ENCODE measurements at regions of chr4 and their contacts with region 1.

Region 1: GRCh38 chr4:140523857-140524742 is at the start of gene ELMOD2:
- DNase-seq: peak; percentile 93 to 99 (median 96)
- ATAC-seq: peak; percentile 99
- H3K4me3 ChIP-seq: peak within 1 kb of the TSS; percentile 65
- H3K4me3 Mint-ChIP-seq: peak within 1 kb of the TSS; percentile 91
- H3K27ac ChIP-seq: peak within 1 kb of the TSS in 1 of 2 donors; percentile 58
- H3K27ac Mint-ChIP-seq: peak within 1 kb of the TSS; percentile 79
- H3K4me1 ChIP-seq: peaks cover 10% of the 10 kb centered on the region
- H3K4me1 Mint-ChIP-seq: peaks cover 26% of the 10 kb centered on the region
- H3K27me3 ChIP-seq: no peaks in the 10 kb centered on the region
- H3K27me3 Mint-ChIP-seq: no peaks in the 10 kb centered on the region
- CTCF ChIP-seq: peak; percentile 82
- total RNA-seq, gene ELMOD2: 12.3 to 14.9 TPM

Region 2: GRCh38 chr4:140373328-140374129 is 150.6 kb before region 1 on chr4 and contains the start of gene SCOC:
- CTCF ChIA-PET with region 1: interaction called, 11 read pairs
- POLR2A ChIA-PET with region 1: interaction called, 26 read pairs
- intact Hi-C with region 1: loop called (anchors 2 kb)
- DNase-seq: peak; percentile 90 to 98 (median 94)
- ATAC-seq: peak; percentile 95
- H3K4me3 ChIP-seq: peak within 1 kb of the TSS; percentile 94
- H3K4me3 Mint-ChIP-seq: peak within 1 kb of the TSS; percentile 87
- H3K27ac ChIP-seq: peak within 1 kb of the TSS; percentile 65 to 83
- H3K27ac Mint-ChIP-seq: no peak within 1 kb of the TSS
- H3K4me1 ChIP-seq: peaks cover 14% of the 10 kb centered on the region
- H3K4me1 Mint-ChIP-seq: peaks cover 32% of the 10 kb centered on the region
- H3K27me3 ChIP-seq: no peaks in the 10 kb centered on the region
- H3K27me3 Mint-ChIP-seq: no peaks in the 10 kb centered on the region
- CTCF ChIP-seq: no peak
- total RNA-seq, gene SCOC: 5.9 to 6.8 TPM

Measured in CD4-positive, alpha-beta T cell (primary cell).